Activated CD8-positive, alpha-beta memory T cell treated with anti-CD3 and anti-CD28 coated beads, Interleukin-2, amount 10 ng/mL, durations not matched to agents 7 days and 5 days (primary cell): ENCODE measurements at regions of chr12 and their contacts with region 1.

Region 1: GRCh38 chr12:123043536-123044001 is 63.1 kb downstream of the ARL6IP4 start:
- DNase-seq: peak; percentile 89
- ATAC-seq: peak; percentile 91
- H3K4me3 Mint-ChIP-seq: no peak overlapping the region
- H3K27ac Mint-ChIP-seq: peak overlapping the region; percentile 54
- H3K4me1 Mint-ChIP-seq: peaks cover 14% of the 10 kb centered on the region
- H3K27me3 Mint-ChIP-seq: peaks cover 3% of the 10 kb centered on the region

Region 2: DNA sequence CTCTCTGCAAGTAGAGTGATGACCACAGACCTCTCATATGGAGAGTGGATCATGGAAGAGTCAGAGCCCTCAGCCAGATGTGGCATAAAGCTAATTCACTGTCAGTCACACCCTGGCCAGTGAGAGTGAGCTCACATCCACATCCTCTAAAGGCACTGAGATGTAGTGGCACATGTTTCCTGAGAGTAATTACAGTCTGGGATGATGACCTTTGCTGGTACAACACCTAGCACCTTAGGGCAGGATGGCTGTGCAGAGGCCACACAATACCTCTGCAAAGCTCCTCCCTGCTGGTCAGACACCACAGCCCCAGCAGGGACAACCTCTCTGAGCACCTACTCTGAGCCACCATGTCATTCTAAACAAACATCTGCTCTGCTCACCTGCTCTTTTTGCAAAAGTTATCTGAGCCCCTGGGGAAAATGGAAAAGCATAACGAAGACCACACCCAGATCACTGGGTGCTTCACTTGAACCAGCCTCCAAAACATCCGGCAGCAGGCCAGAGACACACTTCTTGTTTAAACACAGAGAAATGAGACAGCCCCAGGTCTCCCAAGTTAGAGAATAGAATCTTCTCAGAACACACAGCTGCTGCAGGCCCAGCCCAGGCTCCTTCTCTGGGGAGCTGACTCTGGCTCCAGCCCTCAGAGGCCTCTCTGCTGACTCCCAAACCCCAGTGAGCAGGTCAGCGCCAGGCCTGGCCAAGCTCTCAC is 77.0 kb after region 1 on chr12:
- CTCF ChIA-PET with region 1: interaction called, 15 read pairs
- DNase-seq: peak; percentile 67
- ATAC-seq: peak; percentile 81
- H3K4me3 Mint-ChIP-seq: no peak overlapping the region
- H3K27ac Mint-ChIP-seq: peak overlapping the region; percentile 83
- H3K4me1 Mint-ChIP-seq: peaks cover 33% of the 10 kb centered on the region
- H3K27me3 Mint-ChIP-seq: no peaks in the 10 kb centered on the region

Region 3: GRCh38 chr12:123150744-123151456 is 107.3 kb after region 1 on chr12 and contains the start of gene PITPNM2:
- CTCF ChIA-PET with region 1: interaction called, 30 read pairs
- DNase-seq: peak; percentile 65
- ATAC-seq: peak; percentile 88
- H3K4me3 Mint-ChIP-seq: peak within 1 kb of the TSS; percentile 65
- H3K27ac Mint-ChIP-seq: peak within 1 kb of the TSS; percentile 40
- H3K4me1 Mint-ChIP-seq: peaks cover 14% of the 10 kb centered on the region
- H3K27me3 Mint-ChIP-seq: peaks cover 19% of the 10 kb centered on the region
- total RNA-seq, gene PITPNM2: 8.6 to 11.6 TPM